ENCODE measurements at regions of chr4 and their contacts with region 1.

Region 1: GRCh38 chr4:85826060-85826678 is 351.2 kb downstream of the ARHGAP24 start:
- DNase-seq: peak in 1 of 2 donors; percentile 42
- ATAC-seq: peak; percentile 70
- H3K4me3 ChIP-seq: no peak overlapping the region
- H3K27ac ChIP-seq: peak overlapping the region in 1 of 2 donors; percentile 33
- H3K4me1 ChIP-seq: peaks cover 5 to 7% of the 10 kb centered on the region in 2 donors
- H3K27me3 ChIP-seq: no peaks in the 10 kb centered on the region

Region 2: DNA sequence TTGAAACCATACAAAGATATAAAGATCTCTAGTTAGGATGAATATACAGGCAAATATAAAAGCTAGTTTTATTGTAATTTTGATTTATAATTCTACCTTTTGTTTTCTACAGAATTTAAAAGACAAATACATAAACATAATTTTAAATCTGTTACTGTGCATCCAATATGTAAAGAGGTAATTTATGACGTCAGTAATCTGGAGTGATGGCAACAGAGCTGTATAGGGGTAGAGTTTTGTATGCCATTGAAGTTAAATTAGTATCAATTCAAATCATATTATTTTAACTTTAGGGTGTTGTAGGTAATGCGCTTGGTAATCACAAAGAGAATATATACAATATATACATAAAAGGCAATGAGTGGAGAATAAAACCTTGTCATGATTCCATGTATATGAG is 534.9 kb before region 1 on chr4:
- intact Hi-C with region 1: no loop called
- DNase-seq: no peak
- ATAC-seq: no peak
- H3K4me3 ChIP-seq: no peak overlapping the region
- H3K27ac ChIP-seq: no peak overlapping the region
- H3K4me1 ChIP-seq: no peaks in the 10 kb centered on the region
- H3K27me3 ChIP-seq: no peaks in the 10 kb centered on the region

Region 3: DNA sequence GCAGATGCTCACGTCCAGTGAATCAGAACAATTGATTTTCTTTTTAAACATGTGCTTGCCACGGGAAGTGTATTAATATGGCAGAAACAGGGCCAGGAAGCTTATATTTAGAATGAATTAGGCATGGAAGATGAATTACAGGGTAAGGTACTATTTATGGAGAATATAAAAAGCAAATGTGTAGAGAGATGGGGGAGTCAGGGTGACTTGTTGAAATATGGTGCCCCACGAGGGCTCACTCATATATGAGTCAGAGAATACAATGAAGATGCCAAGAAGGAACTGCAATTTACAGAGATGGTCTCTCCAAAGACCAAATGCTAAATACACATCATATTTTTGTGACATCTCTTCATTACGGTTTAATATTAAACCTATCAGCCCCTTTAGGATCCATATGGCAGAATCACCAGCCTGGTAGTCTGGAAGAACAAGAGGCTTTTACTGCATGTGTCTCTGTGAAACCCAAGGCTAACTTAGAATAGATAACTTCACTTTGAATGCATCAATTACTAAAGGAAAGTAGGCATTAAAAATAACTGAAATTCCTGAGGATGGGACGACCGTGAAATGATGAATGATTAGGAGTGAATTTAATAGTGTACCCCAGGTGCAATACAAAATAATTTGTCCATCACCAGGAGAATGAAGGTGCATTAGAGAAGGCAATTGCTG is 34.0 kb after region 1 on chr4:
- intact Hi-C with region 1: loop called in 1 of 2 experiments (anchors 5 kb)
- DNase-seq: no peak
- ATAC-seq: no peak
- H3K4me3 ChIP-seq: no peak overlapping the region
- H3K27ac ChIP-seq: peak overlapping the region in 1 of 2 donors; percentile 9
- H3K4me1 ChIP-seq: peaks cover 2 to 5% of the 10 kb centered on the region in 2 donors
- H3K27me3 ChIP-seq: no peaks in the 10 kb centered on the region

Measured in aorta (tissue), 5 donors.